Activated CD4-positive, alpha-beta T cell treated with anti-CD3 and anti-CD28 coated beads for 36 hours (primary cell): ENCODE measurements at regions of chrX and their contacts with region 1.

Region 1: GRCh38 chrX:124217304-124218251 is 114.9 kb upstream of the TEX13D start:
- DNase-seq: peak; percentile 79
- ATAC-seq: peak; percentile 92
- H3K4me3 Mint-ChIP-seq: peak overlapping the region; percentile 71
- H3K27ac Mint-ChIP-seq: peak overlapping the region; percentile 96
- H3K4me1 Mint-ChIP-seq: peaks cover 85% of the 10 kb centered on the region
- H3K27me3 Mint-ChIP-seq: no peaks in the 10 kb centered on the region

Region 2: GRCh38 chrX:124010157-124010556 is 207.4 kb before region 1 on chrX:
- CTCF ChIA-PET with region 1: no interaction called
- POLR2A ChIA-PET with region 1: no interaction called
- intact Hi-C with region 1: no loop called
- DNase-seq: no peak
- ATAC-seq: peak; percentile 81
- H3K4me3 Mint-ChIP-seq: peak overlapping the region; percentile 11
- H3K27ac Mint-ChIP-seq: peak overlapping the region; percentile 17
- H3K4me1 Mint-ChIP-seq: peaks cover 66% of the 10 kb centered on the region
- H3K27me3 Mint-ChIP-seq: no peaks in the 10 kb centered on the region

Region 3: GRCh38 chrX:124232523-124233201 is 15.1 kb after region 1 on chrX:
- CTCF ChIA-PET with region 1: interaction called, 5 read pairs
- POLR2A ChIA-PET with region 1: interaction called, 3 read pairs
- intact Hi-C with region 1: loop called in 1 of 2 experiments (anchors 2 kb)
- DNase-seq: peak; percentile 76
- ATAC-seq: peak; percentile 94
- H3K4me3 Mint-ChIP-seq: no peak overlapping the region
- H3K27ac Mint-ChIP-seq: no peak overlapping the region
- H3K4me1 Mint-ChIP-seq: peaks cover 28% of the 10 kb centered on the region
- H3K27me3 Mint-ChIP-seq: no peaks in the 10 kb centered on the region

Region 4: DNA sequence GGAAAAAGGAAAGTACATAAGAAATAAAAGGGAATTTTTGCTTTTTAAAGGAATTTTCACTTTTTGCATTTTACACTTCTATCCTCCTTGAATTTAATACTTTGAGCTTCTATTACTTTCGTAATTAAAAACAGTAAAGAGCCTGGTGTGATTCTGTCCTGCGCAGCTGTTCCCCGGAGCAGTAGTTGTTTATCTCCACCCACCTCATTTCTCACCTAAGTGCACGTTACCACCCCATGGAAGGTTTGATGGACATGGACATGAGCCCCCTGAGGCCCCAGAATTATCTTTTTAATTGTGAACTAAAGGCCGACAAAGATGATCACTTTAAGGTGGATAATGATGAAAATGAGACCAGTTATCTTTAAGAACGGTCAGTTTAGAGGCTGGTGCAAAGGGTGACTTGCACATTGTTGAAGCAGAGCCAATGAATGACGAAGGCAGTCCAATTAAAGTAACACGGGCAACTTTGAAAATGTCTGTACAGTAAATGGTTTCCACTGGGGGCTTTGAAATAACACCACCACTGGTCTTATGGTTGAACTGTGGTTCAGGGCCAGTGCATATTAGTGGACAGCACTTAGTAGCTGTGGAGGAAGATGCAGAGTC is 62.8 kb after region 1 on chrX:
- CTCF ChIA-PET with region 1: no interaction called
- POLR2A ChIA-PET with region 1: no interaction called
- intact Hi-C with region 1: loop called in 1 of 2 experiments (anchors 5 kb)
- DNase-seq: no peak
- ATAC-seq: no peak
- H3K4me3 Mint-ChIP-seq: no peak overlapping the region
- H3K27ac Mint-ChIP-seq: peak overlapping the region; percentile 26
- H3K4me1 Mint-ChIP-seq: peaks cover 24% of the 10 kb centered on the region
- H3K27me3 Mint-ChIP-seq: no peaks in the 10 kb centered on the region

Region 5: GRCh38 chrX:124346117-124346876 is 128.7 kb after region 1 on chrX and contains the start of gene SH2D1A:
- CTCF ChIA-PET with region 1: interaction called, 14 read pairs
- POLR2A ChIA-PET with region 1: no interaction called
- intact Hi-C with region 1: loop called (anchors 1 to 2 kb)
- DNase-seq: peak; percentile 36
- ATAC-seq: peak; percentile 35
- H3K4me3 Mint-ChIP-seq: peak within 1 kb of the TSS; percentile 88
- H3K27ac Mint-ChIP-seq: peak within 1 kb of the TSS; percentile 95
- H3K4me1 Mint-ChIP-seq: peaks cover 46% of the 10 kb centered on the region
- H3K27me3 Mint-ChIP-seq: no peaks in the 10 kb centered on the region
- total RNA-seq, gene SH2D1A: 26.8 to 32.5 TPM

Region 6: GRCh38 chrX:124679199-124679598 is 461.6 kb after region 1 on chrX:
- CTCF ChIA-PET with region 1: no interaction called
- POLR2A ChIA-PET with region 1: no interaction called
- intact Hi-C with region 1: no loop called
- DNase-seq: no peak
- ATAC-seq: no peak
- H3K4me3 Mint-ChIP-seq: no peak overlapping the region
- H3K27ac Mint-ChIP-seq: no peak overlapping the region
- H3K4me1 Mint-ChIP-seq: no peaks in the 10 kb centered on the region
- H3K27me3 Mint-ChIP-seq: no peaks in the 10 kb centered on the region

Region 7: DNA sequence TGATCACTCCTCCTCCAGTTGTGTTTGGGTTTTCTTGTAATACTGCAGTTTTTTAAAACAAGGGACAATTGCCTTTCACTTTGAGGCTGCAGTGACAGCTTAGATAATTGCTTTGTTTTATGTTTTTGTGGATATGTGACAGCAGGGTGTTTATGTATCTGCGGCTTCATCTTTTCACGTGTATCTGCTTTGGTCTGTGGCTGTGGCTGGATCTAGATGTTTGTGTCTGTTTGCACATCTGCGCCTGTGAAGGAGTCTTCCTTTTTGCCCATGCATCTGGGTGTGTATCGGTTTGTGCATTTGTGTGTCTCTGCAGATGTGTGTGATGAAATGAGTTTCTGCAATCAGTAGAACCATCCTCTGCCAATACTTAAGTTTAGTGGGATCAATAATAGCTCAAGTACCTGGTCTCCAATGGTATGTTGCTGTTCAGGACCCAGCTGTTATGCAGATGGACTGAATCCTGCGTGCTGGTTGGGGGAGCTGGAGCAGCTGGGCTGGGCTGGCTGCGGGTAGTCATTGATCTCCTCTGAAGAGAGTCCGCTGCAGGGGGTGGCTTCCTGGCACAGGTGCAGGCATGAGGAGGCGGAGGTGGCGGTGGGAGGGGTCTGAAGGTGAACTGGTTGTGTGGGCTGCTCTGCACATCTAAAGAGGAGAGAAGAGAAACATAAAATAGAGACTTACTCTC is 519.1 kb after region 1 on chrX:
- CTCF ChIA-PET with region 1: no interaction called
- POLR2A ChIA-PET with region 1: no interaction called
- intact Hi-C with region 1: loop called in 1 of 2 experiments (anchors 5 kb)
- DNase-seq: peak; percentile 72
- ATAC-seq: peak; percentile 89
- H3K4me3 Mint-ChIP-seq: peak overlapping the region; percentile 59
- H3K27ac Mint-ChIP-seq: peak overlapping the region; percentile 62
- H3K4me1 Mint-ChIP-seq: peaks cover 40% of the 10 kb centered on the region
- H3K27me3 Mint-ChIP-seq: no peaks in the 10 kb centered on the region